HEK293T (cell line): ENCODE measurements at regions of chr5 and their contacts with region 1.

Region 1: GRCh38 chr5:174418928-174419796 is 305.2 kb upstream of the MSX2 start:
- DNase-seq: peak; percentile 91

Region 2: GRCh38 chr5:174355208-174355612 is 64.0 kb before region 1 on chr5:
- CTCF ChIA-PET with region 1: interaction called, 14 read pairs
- POLR2A ChIA-PET with region 1: interaction called, 3 read pairs
- DNase-seq: no peak

Region 3: GRCh38 chr5:174384509-174384947 is 34.6 kb before region 1 on chr5:
- CTCF ChIA-PET with region 1: interaction called, 3 read pairs
- POLR2A ChIA-PET with region 1: interaction called, 11 read pairs
- DNase-seq: no peak

Region 4: DNA sequence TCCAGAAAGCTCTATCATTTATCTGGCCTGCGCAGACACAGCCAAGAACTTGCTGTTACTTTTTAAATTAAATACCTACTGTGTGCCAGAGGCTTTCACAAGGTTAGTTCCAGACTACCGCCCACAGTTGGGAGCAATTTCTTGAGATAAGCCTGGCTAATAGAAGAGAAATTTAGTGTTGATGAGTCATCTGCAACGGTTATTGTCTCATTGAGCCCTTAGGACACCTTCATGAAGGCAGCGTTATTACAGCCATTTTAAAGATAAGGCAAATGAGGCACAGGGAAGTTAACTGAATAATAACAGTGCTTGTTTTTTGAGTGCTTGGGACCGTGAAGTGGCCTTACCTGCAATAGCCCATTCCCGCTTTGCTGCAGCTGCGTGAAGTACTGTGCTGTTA is 12.3 kb after region 1 on chr5:
- CTCF ChIA-PET with region 1: interaction called, 10 read pairs
- POLR2A ChIA-PET with region 1: no interaction called
- DNase-seq: no peak

Region 5: DNA sequence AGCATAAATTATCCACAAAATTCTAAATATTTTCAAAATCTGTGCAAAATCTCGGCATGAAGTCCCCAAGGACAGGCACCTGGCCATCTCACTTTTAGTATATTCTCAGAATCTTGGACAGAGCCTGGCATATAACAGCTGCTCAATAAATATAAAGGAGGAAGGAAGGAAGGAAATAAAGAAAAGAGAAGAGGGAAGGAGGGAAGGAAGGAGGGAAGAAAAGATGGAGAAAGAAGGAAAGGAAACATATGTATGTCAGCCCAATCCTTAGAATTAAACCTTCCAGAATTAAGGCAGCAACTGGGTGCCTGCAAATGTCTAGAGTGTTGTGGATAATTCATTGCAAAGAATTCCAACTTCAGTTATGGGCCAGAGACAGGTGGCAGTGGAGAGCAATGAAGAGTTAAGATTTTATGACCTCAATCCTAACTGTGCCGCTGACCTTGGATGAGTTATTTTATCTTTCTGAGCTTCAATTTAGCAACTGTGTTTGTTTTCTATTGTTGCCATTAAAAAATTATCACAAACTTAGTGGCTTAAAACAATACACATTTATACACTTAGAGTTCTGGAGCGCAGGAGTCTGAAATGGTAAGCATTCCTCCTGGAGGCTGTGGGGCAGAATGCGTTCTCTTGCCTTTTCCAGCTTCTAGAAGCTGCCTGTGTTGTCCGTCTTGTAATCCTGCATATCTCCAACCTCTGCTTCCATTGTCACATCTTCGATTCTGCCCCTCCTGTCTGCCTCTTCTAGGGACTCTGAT is 104.3 kb after region 1 on chr5:
- CTCF ChIA-PET with region 1: interaction called, 14 read pairs
- POLR2A ChIA-PET with region 1: no interaction called
- DNase-seq: no peak

Region 6: GRCh38 chr5:174735498-174736330 is 316.6 kb after region 1 on chr5:
- CTCF ChIA-PET with region 1: interaction called, 15 read pairs
- POLR2A ChIA-PET with region 1: no interaction called
- DNase-seq: peak; percentile 77

Region 7: DNA sequence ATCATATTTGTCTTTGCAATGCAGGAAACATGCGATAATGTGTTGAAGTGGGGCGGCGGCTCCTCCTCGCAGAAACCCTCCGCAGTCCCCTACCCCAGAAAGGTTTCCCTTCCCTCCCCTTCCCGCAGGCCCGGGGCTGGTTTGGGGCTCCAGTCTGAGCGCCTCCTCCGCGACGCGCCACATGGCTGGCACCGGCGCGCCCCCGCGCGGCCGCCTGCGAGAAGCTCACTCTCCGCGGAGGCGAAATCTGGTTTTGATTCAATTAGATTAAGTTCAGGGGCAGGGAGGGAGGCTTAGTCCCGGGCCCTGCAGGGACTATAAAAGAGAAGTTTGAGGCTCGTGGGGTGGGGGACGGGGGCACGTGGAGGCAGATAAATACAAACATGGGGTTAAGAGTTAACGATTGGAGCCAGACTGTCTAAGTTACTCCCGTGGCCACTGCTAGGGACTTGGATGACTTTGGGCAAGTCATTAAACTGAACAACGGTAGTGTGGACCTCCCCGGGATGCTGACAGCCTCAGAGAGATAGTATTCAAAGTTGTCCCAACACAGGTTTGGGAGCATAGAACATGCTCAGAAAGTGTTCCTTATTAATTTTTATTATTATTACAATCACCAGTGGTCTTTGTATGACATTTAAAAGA is 374.6 kb after region 1 on chr5:
- CTCF ChIA-PET with region 1: interaction called, 12 read pairs
- POLR2A ChIA-PET with region 1: no interaction called
- DNase-seq: peak; percentile 88